PC-3 (cell line): ENCODE measurements at regions of chr1 and their contacts with region 1.

Region 1: GRCh38 chr1:151790071-151790940 is at the start of gene TDRKH:
- DNase-seq: peak; percentile 99
- ATAC-seq: peak; percentile 96
- H3K4me3 ChIP-seq: peak within 1 kb of the TSS; percentile 83
- H3K27ac ChIP-seq: no peak within 1 kb of the TSS
- H3K4me1 ChIP-seq: peaks cover 12% of the 10 kb centered on the region
- H3K27me3 ChIP-seq: no peaks in the 10 kb centered on the region
- CTCF ChIP-seq: peak; percentile 45
- total RNA-seq, gene TDRKH: 15.2 and 15.6 TPM in 2 replicates

Region 2: GRCh38 chr1:151510957-151511635 is 279.2 kb before region 1 on chr1 and contains the start of gene CGN:
- CTCF ChIA-PET with region 1: no interaction called
- POLR2A ChIA-PET with region 1: no interaction called
- intact Hi-C with region 1: no loop called
- DNase-seq: peak; percentile 95
- ATAC-seq: peak; percentile 80
- H3K4me3 ChIP-seq: peak within 1 kb of the TSS; percentile 84
- H3K27ac ChIP-seq: peak within 1 kb of the TSS; percentile 96
- H3K4me1 ChIP-seq: peaks cover 50% of the 10 kb centered on the region
- H3K27me3 ChIP-seq: no peaks in the 10 kb centered on the region
- CTCF ChIP-seq: no peak
- total RNA-seq, gene CGN: 13.3 and 20.1 TPM in 2 replicates

Region 3: DNA sequence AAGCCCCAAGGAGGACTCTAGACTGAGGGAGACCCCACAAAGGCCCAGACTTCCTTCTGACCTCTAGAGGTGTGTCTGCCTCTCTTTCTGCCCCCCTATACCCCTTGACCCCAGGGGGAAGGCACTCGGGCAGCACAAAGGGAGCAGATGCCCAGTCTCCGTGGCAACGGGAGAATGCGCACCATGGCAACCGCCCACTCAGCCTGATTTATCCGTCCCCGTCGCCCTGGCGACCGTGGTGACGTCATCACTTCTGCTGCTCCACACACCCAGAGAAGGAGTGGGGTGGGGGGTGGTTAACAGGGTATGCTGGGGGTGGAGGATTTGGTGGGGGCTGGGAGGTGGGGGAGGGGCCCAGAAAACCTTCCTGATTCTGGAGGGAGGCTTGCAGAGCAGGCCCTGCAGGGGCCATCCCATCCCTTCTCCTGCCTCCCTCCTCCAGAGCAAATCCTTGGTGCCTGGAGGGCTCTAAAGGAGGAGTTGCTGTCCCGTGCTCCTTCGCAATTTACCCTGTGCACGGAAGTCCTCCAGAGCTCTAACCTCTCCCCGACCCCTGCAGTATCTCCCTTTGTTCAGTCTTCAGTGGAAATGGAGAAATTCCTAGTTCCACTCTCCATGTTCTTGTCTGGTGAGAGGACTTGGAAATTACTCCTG is 80.0 kb before region 1 on chr1:
- CTCF ChIA-PET with region 1: no interaction called
- POLR2A ChIA-PET with region 1: no interaction called
- intact Hi-C with region 1: no loop called
- DNase-seq: no peak
- ATAC-seq: no peak
- H3K4me3 ChIP-seq: no peak overlapping the region
- H3K27ac ChIP-seq: no peak overlapping the region
- H3K4me1 ChIP-seq: no peaks in the 10 kb centered on the region
- H3K27me3 ChIP-seq: no peaks in the 10 kb centered on the region
- CTCF ChIP-seq: no peak

Region 4: DNA sequence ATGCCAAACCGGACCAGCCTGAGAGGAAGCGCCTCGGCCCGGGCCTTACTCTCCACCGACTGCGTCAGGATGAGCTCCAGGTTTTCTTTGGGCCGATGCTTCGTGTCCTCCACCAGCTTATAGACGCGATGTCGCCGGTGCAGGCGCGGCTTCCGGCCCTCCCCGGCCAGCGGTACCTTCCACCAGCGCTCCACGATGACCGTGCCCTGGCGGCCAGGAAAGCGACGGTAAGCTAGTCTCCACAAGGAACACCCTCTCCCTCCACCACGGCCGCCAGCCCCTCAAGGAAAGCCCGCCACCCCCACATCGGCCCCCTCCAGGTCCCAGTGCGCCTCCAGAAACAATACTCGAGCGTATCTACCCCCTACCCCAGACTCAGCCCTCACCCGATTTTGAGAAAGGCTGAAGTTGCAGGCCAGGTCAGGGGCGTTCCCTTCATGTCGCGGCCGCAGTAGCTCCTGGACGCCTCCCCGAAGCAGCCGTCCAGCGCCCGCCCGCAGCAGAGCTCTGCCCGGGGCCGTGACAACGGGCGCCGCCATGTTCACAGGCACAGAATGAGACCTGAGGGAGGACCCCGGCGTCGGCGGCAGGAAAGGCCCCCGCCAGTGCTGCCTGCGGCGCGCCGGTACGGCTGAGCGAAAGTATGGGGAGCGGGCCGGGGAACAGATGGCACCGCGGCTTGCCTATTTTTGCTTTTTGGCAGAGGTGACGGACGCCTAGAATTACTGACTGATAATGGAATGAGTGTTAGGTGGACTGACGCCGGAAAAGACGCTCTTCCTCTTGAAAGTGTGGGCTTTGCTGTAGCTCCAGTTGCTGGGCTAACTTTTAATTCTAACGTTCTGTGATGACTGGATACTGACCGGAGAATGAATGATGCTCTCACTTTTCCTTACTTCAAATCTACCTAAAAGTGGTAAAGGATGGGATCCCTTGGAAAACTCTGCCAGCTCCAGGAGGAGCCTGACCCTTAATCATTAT is 27.1 kb before region 1 on chr1 and contains the start of gene MRPL9:
- CTCF ChIA-PET with region 1: interaction called, 3 read pairs
- POLR2A ChIA-PET with region 1: interaction called, 6 read pairs
- intact Hi-C with region 1: loop called (anchors 1 kb)
- DNase-seq: peak; percentile 89
- ATAC-seq: peak; percentile 98
- H3K4me3 ChIP-seq: peak within 1 kb of the TSS; percentile 77
- H3K27ac ChIP-seq: peak within 1 kb of the TSS; percentile 47
- H3K4me1 ChIP-seq: peaks cover 36% of the 10 kb centered on the region
- H3K27me3 ChIP-seq: no peaks in the 10 kb centered on the region
- CTCF ChIP-seq: no peak
- total RNA-seq, gene MRPL9: 229 and 260 TPM in 2 replicates

Region 5: GRCh38 chr1:151881456-151881855 is 91.2 kb after region 1 on chr1:
- CTCF ChIA-PET with region 1: no interaction called
- POLR2A ChIA-PET with region 1: interaction called, 10 read pairs
- intact Hi-C with region 1: no loop called
- DNase-seq: peak; percentile 23
- ATAC-seq: 0 out of 2 replicates have a peak, but pooled peaks have one; percentile 43
- H3K4me3 ChIP-seq: no peak overlapping the region
- H3K27ac ChIP-seq: no peak overlapping the region
- H3K4me1 ChIP-seq: peaks cover 12% of the 10 kb centered on the region
- H3K27me3 ChIP-seq: no peaks in the 10 kb centered on the region
- CTCF ChIP-seq: peak; percentile 48; the same call in 1 of the 2 replicates